ENCODE measurements at regions of chr18 and their contacts with region 1.

Region 1: DNA sequence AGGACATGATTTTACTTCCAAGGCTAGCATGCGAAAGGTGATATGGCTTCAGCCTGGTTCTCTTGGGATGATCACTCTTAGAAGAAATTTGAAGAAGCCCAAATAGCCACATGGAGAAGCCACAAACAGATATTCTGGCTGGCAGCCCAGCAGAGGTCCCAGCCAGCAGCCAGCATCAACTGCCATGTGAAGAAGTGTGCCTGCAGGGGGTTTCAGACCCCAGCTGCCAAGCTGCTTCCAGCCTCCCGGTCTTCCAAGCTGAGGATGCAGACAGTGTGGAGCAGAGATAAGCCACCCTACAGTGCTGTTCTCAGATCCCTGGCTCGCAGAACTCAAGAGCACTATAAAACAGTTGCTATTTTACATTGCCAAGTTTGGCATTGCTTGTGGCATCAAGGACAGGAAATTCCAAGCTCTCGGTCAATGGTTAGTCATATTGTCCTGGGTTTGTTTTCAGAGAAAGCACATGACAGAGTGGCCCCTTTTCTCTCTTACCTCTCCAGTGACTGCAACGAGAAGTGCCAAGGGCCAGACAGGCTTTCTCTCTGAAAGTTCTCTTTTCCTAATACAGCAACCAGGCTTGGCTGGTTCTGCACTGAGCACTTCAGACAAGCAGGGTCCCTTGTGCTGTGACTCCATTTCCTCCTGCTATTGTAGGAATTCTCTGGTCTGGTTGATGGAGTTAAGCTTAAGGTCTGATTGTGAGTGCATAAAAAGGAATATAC is 223.7 kb downstream of the ANKRD30B start:
- DNase-seq: peak; percentile 93
- ATAC-seq: peak; percentile 53
- H3K4me3 ChIP-seq: peak overlapping the region; percentile 38; the same call in 1 of the 2 replicates
- H3K27ac ChIP-seq: peak overlapping the region; percentile 95
- H3K4me1 ChIP-seq: peaks cover 78% of the 10 kb centered on the region
- H3K27me3 ChIP-seq: no peaks in the 10 kb centered on the region
- CTCF ChIP-seq: no peak

Region 2: DNA sequence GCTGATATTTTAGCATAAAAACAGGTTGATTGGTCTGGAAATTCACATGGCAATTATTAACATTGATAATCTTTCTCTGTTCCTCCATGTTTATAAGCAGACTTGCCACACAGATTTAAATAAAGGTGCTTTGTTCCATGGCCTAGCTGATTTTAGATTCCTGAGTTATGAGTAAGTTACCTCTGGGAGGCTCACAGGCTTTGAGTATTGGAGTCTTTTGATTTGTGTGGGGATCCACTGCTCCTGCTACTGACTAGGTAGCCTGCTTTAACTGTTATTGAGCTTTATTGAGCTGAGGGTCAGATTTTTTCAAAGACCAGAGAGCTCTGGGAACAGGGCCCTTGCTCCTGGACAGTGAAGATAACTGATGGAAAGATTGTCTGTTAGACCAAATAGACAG is 57.5 kb before region 1 on chr18:
- CTCF ChIA-PET with region 1: no interaction called
- POLR2A ChIA-PET with region 1: no interaction called
- intact Hi-C with region 1: loop called (anchors 5 kb)
- DNase-seq: peak; percentile 61
- ATAC-seq: peak; percentile 87
- H3K4me3 ChIP-seq: no peak overlapping the region
- H3K27ac ChIP-seq: no peak overlapping the region
- H3K4me1 ChIP-seq: peaks cover 14% of the 10 kb centered on the region
- H3K27me3 ChIP-seq: no peaks in the 10 kb centered on the region
- CTCF ChIP-seq: no peak

Region 3: GRCh38 chr18:14933964-14934363 is 37.7 kb before region 1 on chr18:
- CTCF ChIA-PET with region 1: no interaction called
- POLR2A ChIA-PET with region 1: no interaction called
- intact Hi-C with region 1: no loop called
- DNase-seq: no peak
- ATAC-seq: no peak
- H3K4me3 ChIP-seq: no peak overlapping the region
- H3K27ac ChIP-seq: no peak overlapping the region
- H3K4me1 ChIP-seq: peaks cover 13% of the 10 kb centered on the region
- H3K27me3 ChIP-seq: no peaks in the 10 kb centered on the region
- CTCF ChIP-seq: no peak

Region 4: GRCh38 chr18:14943967-14944632 is 27.5 kb before region 1 on chr18:
- CTCF ChIA-PET with region 1: no interaction called
- POLR2A ChIA-PET with region 1: no interaction called
- intact Hi-C with region 1: loop called (anchors 2 kb)
- DNase-seq: peak; percentile 41
- ATAC-seq: peak; percentile 59
- H3K4me3 ChIP-seq: no peak overlapping the region
- H3K27ac ChIP-seq: no peak overlapping the region
- H3K4me1 ChIP-seq: peaks cover 6% of the 10 kb centered on the region
- H3K27me3 ChIP-seq: no peaks in the 10 kb centered on the region
- CTCF ChIP-seq: no peak

Region 5: DNA sequence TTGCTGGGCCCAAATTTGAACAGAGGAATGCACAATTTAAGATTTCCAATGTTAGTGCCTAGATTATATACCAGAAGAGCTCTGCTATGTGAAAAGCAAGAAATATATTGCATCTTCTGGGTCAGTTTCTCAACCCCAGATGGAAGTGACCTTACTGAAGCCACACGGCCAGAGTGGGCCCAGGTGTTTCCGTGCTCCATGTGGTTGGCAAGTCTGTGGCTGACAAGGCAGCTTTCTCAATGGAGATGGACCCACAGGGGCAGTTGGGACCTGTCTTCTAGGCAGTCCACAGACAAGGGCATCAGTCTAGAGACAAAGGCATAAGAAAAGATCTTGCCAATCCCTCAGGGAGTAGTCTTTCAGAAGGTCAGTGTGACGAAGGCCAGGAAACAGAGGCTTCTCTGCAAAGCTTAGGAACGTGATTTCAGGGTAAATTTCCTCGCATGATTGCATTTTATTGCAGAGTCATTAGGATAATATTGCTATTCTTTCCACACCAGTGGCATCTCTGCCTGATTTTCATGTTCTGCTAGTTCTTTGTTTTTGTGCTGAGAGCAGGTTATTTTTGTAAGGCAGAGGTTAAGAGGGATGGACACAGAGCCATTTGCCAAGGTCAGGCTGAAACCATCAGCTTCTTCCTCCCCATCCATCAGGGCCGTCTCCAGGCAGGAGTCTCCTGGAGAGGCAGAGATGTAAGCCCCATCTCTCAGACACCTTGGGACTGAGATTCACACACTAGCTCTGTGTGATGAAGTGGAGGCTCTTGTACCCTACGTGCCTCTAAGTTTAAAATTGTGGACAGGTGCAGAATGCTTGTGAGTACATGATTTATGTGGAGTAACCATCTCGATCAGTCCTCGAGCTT is 21.6 kb before region 1 on chr18:
- CTCF ChIA-PET with region 1: no interaction called
- POLR2A ChIA-PET with region 1: no interaction called
- intact Hi-C with region 1: loop called (anchors 1 kb)
- DNase-seq: peak; percentile 69
- ATAC-seq: peak; percentile 84
- H3K4me3 ChIP-seq: no peak overlapping the region
- H3K27ac ChIP-seq: no peak overlapping the region
- H3K4me1 ChIP-seq: peaks cover 12% of the 10 kb centered on the region
- H3K27me3 ChIP-seq: no peaks in the 10 kb centered on the region
- CTCF ChIP-seq: no peak

Measured in PC-3 (cell line).